A673 (cell line): ENCODE measurements at regions of chr6 and their contacts with region 1.

Region 1: GRCh38 chr6:101572627-101573026 is 179.1 kb downstream of the GRIK2 start:
- DNase-seq: no peak
- H3K4me3 ChIP-seq: no peak overlapping the region
- H3K27ac ChIP-seq: no peak overlapping the region
- H3K4me1 ChIP-seq: no peaks in the 10 kb centered on the region
- H3K27me3 ChIP-seq: no peaks in the 10 kb centered on the region
- CTCF ChIP-seq: no peak

Region 2: GRCh38 chr6:101541894-101542293 is 30.7 kb before region 1 on chr6:
- CTCF ChIA-PET with region 1: no interaction called
- POLR2A ChIA-PET with region 1: no interaction called
- intact Hi-C with region 1: loop called (anchors 1 kb)
- DNase-seq: no peak
- H3K4me3 ChIP-seq: no peak overlapping the region
- H3K27ac ChIP-seq: no peak overlapping the region
- H3K4me1 ChIP-seq: peaks cover 5% of the 10 kb centered on the region
- H3K27me3 ChIP-seq: no peaks in the 10 kb centered on the region
- CTCF ChIP-seq: no peak

Region 3: GRCh38 chr6:101554231-101554630 is 18.4 kb before region 1 on chr6:
- CTCF ChIA-PET with region 1: no interaction called
- POLR2A ChIA-PET with region 1: no interaction called
- intact Hi-C with region 1: no loop called
- DNase-seq: no peak
- H3K4me3 ChIP-seq: no peak overlapping the region
- H3K27ac ChIP-seq: no peak overlapping the region
- H3K4me1 ChIP-seq: peaks cover 3% of the 10 kb centered on the region
- H3K27me3 ChIP-seq: no peaks in the 10 kb centered on the region
- CTCF ChIP-seq: no peak